Activated CD4-positive, alpha-beta memory T cell treated with anti-CD3 and anti-CD28 coated beads for 36 hours (primary cell): ENCODE measurements at regions of chr9 and their contacts with region 1.

Region 1: GRCh38 chr9:34048923-34049697 is 423 bp upstream of the UBAP2 start:
- DNase-seq: peak; percentile 97
- H3K4me3 Mint-ChIP-seq: peak overlapping the region; percentile 89
- H3K27ac Mint-ChIP-seq: peak overlapping the region; percentile 99
- H3K4me1 Mint-ChIP-seq: peaks cover 32% of the 10 kb centered on the region
- H3K27me3 Mint-ChIP-seq: no peaks in the 10 kb centered on the region

Region 2: GRCh38 chr9:33473643-33474352 is 575.3 kb before region 1 on chr9 and contains the start of gene NOL6:
- CTCF ChIA-PET with region 1: no interaction called
- POLR2A ChIA-PET with region 1: interaction called, 4 read pairs
- intact Hi-C with region 1: loop called (anchors 5 kb)
- DNase-seq: peak; percentile 99
- H3K4me3 Mint-ChIP-seq: peak within 1 kb of the TSS; percentile 99
- H3K27ac Mint-ChIP-seq: peak within 1 kb of the TSS; percentile 93
- H3K4me1 Mint-ChIP-seq: peaks cover 24% of the 10 kb centered on the region
- H3K27me3 Mint-ChIP-seq: no peaks in the 10 kb centered on the region
- total RNA-seq, gene NOL6: 38.1 to 39.7 TPM

Region 3: GRCh38 chr9:33988219-33988890 is 60.8 kb before region 1 on chr9:
- CTCF ChIA-PET with region 1: no interaction called
- POLR2A ChIA-PET with region 1: interaction called, 4 read pairs
- intact Hi-C with region 1: loop called (anchors 5 kb)
- DNase-seq: peak; percentile 63
- H3K4me3 Mint-ChIP-seq: no peak overlapping the region
- H3K27ac Mint-ChIP-seq: peak overlapping the region; percentile 28
- H3K4me1 Mint-ChIP-seq: peaks cover 16% of the 10 kb centered on the region
- H3K27me3 Mint-ChIP-seq: no peaks in the 10 kb centered on the region

Region 4: DNA sequence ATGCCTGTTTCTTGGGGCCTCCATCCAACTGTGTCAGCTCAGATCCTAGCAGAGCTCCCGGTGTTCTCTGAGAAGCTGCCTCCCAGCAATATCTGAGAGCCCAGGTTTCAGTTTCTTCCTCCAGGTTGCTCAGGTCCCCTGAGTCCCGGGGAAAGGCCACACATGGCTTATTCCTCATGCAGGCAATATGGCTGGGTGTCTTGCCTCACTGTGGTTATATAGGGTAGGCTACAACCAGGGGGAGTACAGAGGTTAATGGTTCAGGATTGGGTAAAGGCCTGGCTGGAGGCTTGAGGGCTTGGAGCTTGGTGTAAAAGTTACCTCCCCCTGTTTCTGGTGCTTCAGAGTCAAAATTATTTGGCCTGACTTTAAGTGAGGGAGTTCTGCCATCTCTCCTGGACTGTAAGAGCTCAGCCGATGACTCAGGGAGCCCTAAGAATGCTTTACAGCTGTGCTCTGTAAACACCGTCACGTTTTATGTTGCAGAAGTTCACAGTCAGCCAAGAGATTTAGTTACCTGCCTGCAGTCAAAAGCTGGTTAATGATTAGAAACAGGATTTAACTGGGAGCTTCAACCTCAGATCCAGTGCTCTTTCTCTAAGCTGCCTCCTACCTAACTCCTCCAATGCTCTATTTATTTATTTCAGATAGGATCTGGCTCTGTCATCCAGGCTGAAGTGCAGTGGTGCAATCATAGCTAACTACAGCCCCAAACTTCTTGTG is 23.9 kb after region 1 on chr9:
- CTCF ChIA-PET with region 1: interaction called, 18 read pairs
- POLR2A ChIA-PET with region 1: interaction called, 5 read pairs
- intact Hi-C with region 1: no loop called
- DNase-seq: no peak
- H3K4me3 Mint-ChIP-seq: no peak overlapping the region
- H3K27ac Mint-ChIP-seq: no peak overlapping the region
- H3K4me1 Mint-ChIP-seq: no peaks in the 10 kb centered on the region
- H3K27me3 Mint-ChIP-seq: no peaks in the 10 kb centered on the region

Region 5: GRCh38 chr9:34126207-34127034 is 77.3 kb after region 1 on chr9 and contains the start of gene DCAF12:
- CTCF ChIA-PET with region 1: no interaction called
- POLR2A ChIA-PET with region 1: no interaction called
- intact Hi-C with region 1: loop called (anchors 1 kb)
- DNase-seq: peak; percentile 94
- H3K4me3 Mint-ChIP-seq: peak within 1 kb of the TSS; percentile 98
- H3K27ac Mint-ChIP-seq: peak within 1 kb of the TSS; percentile 94
- H3K4me1 Mint-ChIP-seq: peaks cover 35% of the 10 kb centered on the region
- H3K27me3 Mint-ChIP-seq: no peaks in the 10 kb centered on the region
- total RNA-seq, gene DCAF12: 32.5 to 35.4 TPM

Region 6: DNA sequence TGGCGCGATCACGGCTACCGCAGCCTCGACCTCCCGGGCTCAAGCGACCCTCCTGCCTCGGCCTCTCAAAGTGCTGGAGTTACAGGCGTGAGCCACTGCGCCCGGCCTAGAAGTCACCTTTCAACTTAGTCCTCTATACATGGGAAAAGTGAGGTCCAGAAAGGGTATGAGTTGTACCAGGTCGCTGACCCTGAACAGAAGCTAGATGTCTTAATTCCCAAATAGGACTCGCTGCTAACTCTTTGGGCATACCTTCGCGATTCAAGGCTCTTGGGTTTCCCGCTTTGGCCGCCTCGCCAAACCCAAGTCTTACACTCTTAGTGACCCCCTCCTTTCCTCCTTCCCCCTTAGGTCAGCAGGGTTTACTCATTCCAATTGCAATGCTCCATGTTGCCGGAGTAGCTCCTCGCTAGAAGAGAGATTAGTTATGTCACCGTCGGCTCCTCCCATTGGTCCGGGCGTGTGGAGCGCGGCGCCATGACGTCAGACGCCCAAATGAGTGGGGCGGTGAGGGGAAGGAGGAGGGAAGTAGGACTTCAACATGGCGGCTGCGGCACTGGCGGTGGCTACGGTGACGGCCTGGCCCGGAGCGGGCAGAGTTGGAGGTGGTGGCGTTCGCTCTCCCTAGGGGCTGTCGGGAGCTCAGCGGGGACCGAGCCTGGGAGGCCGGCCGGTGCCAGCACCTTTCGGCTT is 129.6 kb after region 1 on chr9 and contains the start of gene UBAP1:
- CTCF ChIA-PET with region 1: no interaction called
- POLR2A ChIA-PET with region 1: interaction called, 16 read pairs
- intact Hi-C with region 1: loop called (anchors 1 kb)
- DNase-seq: peak; percentile 98
- H3K4me3 Mint-ChIP-seq: peak within 1 kb of the TSS; percentile 90
- H3K27ac Mint-ChIP-seq: peak within 1 kb of the TSS; percentile 96
- H3K4me1 Mint-ChIP-seq: peaks cover 12% of the 10 kb centered on the region
- H3K27me3 Mint-ChIP-seq: no peaks in the 10 kb centered on the region
- total RNA-seq, gene UBAP1: 30.5 to 32.0 TPM

Region 7: DNA sequence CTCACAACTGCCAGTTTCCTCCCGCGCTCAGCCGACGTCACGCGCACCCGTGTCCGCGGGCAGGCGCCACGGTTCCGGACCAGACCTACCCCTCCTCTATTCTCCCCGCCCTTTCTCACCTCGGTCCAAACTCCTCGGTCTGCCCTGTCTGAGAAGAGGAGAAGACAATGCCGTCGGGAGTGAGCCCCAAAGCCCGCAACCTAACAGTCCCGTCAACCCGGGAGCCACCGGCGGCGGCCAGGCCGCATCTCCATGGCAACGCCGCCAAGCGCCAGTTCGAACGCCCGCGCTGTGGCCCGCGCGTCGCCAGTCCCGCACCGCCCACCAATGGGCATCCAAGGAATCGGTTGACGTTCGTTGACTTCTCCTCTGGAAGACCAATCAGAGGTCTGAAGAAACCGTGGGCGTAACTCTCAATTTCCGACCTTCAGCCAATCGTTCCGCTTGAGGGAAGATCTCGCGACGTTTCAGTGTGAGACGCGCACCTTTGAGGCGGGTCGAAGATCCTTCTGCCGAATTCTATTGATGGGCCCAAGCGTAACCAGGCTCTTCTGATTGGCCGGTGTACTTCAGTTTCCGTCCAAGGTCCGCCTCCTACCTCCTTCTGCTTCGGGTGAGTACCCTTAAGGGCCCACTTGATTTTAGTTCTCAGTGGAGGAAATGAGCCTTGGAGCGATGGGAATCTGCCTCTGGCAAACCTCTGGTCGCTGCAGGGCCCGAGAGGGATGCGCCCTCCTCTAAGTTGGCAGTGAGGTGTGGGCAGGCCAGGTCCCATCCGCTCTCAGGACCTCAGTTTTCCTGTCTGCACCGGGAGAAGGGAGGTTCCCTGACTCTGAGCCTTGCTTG is 280.1 kb after region 1 on chr9 and contains the starts of genes KIF24 and NUDT2:
- CTCF ChIA-PET with region 1: no interaction called
- POLR2A ChIA-PET with region 1: no interaction called
- intact Hi-C with region 1: loop called (anchors 1 kb)
- DNase-seq: peak; percentile 98
- H3K4me3 Mint-ChIP-seq: peak within 1 kb of the TSS; percentile 97
- H3K27ac Mint-ChIP-seq: peak within 1 kb of the TSS; percentile 94
- H3K4me1 Mint-ChIP-seq: peaks cover 30% of the 10 kb centered on the region
- H3K27me3 Mint-ChIP-seq: no peaks in the 10 kb centered on the region
- total RNA-seq, gene KIF24: 5.6 to 5.7 TPM
- total RNA-seq, gene NUDT2: 42.4 to 43.3 TPM